Activated CD8-positive, alpha-beta memory T cell treated with anti-CD3 and anti-CD28 coated beads, Interleukin-2, amount 10 ng/mL, durations not matched to agents 7 days and 5 days (primary cell): ENCODE measurements at regions of chr16 and their contacts with region 1.

Region 1: DNA sequence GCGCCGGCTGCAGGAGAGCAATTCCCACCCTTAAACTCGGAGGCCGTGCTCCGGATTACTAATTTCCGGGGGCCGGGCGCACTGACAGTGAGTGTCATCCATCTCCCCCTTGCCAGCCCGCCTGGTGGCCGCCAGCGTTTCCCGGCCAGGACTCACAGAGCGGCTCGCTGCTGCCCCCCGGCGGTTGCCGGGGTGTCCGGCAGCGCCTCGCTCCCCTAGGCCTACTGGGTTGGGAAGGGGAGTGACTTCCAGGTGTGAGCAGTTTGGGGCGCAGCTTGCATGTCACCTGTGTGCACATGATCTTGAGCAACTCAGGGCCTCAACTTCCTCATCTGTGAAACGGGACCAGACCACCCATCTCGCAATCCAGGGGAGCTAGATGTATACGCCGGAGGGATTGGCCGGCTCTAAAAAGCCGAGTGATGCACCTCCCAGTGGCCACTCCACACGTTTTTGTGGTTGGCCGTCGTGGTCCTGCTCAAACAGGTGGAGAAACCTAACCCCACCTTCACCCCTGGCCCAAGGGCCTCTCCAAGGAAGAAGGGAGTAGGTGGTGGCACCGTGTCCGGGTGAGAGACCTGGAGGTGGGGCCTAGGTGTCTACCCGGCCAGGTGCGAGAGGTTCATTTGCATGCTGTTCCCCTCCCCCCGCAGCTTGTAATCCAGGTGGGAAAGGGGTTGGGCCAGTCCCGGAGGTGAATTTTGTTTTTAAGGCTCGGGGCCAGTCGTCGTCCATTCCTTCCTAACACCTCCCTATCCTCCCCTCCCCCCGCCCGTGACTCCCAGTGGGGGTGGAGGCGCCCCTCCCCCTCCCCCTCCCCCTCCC is 2.4 kb upstream of the GSE1 start:
- DNase-seq: peak; percentile 93
- ATAC-seq: peak; percentile 70
- H3K4me3 Mint-ChIP-seq: peak overlapping the region; percentile 53
- H3K27ac Mint-ChIP-seq: peak overlapping the region; percentile 60
- H3K4me1 Mint-ChIP-seq: peaks cover 27% of the 10 kb centered on the region
- H3K27me3 Mint-ChIP-seq: no peaks in the 10 kb centered on the region

Region 2: DNA sequence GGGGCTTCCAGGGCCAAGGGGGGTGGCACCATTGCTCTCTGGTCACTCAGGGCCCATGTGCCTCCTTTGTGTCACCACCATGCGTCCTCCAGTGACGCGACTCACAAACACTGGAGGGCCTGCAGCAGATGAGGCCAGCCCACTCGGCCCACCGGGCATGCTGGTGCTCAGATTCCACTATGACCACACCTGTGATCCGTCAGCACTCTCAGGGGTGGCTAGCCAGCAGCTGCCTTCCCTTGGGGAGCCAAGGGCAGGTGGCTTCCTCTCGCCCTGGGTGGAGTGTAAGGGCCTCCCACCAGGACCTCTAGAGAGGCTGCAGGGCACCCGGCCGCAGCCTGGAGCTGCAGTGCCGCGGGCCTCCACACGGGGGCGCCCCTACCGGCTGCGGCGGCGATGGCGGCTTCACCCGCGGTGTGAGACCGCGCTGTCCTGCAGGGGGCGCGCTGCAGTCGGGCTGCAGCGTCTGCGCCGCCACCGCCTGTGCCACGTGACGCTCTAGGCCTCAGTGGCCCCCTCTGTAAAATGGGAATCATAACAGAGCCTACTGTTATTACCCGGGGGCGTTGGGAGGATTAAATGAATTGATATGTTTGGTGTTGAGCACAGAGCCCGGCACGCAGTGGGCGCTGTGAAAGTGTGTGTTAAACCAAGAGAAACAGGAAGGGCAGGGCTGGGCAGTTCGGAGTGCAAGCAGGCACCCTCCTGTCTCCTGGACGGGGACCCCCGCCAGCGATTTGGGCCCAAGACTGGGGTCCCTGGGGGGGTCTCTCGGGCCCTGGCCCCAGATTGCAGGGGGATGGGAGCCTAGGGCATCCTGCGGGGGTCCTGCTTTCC is 190.0 kb before region 1 on chr16:
- CTCF ChIA-PET with region 1: interaction called, 237 read pairs
- DNase-seq: peak; percentile 76
- ATAC-seq: peak; percentile 72
- H3K4me3 Mint-ChIP-seq: no peak overlapping the region
- H3K27ac Mint-ChIP-seq: no peak overlapping the region
- H3K4me1 Mint-ChIP-seq: peaks cover 6% of the 10 kb centered on the region
- H3K27me3 Mint-ChIP-seq: no peaks in the 10 kb centered on the region

Region 3: DNA sequence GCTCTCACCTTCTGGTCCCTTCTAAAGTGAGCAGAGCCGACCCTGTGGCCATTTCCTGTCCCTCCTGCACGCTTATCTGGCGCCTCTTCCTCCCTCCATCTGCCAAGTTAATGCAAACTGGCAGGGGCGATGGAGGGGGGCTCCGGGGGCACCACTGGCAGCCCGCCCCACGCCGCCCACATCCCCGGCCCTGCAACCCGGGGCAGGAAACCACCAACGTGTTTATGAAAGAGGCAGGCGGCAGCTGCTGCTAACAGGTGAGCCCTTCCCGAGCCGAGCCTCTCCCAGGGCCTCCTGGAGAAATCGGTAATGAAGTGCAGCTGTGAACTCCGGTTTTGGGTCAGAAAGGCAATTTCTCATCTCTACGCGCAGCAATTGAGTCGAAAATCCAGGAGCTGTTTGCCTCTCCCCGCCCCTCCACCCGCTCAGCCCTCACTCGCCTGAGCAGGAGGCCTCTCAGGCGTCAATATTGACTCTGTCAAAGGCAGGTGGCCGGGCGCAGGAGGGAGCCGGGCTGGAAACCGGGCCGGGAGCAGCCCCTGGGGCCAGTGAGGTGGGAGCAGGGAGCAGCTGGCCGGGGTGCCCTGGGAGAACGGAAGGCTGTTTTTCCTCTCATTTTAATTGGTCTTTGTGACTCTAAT is 162.0 kb before region 1 on chr16:
- CTCF ChIA-PET with region 1: interaction called, 11 read pairs
- DNase-seq: peak; percentile 48
- ATAC-seq: peak; percentile 65
- H3K4me3 Mint-ChIP-seq: no peak overlapping the region
- H3K27ac Mint-ChIP-seq: peak overlapping the region; percentile 24
- H3K4me1 Mint-ChIP-seq: peaks cover 15% of the 10 kb centered on the region
- H3K27me3 Mint-ChIP-seq: no peaks in the 10 kb centered on the region

Region 4: GRCh38 chr16:85491058-85491771 is 119.5 kb before region 1 on chr16:
- CTCF ChIA-PET with region 1: interaction called, 30 read pairs
- DNase-seq: peak; percentile 53
- ATAC-seq: peak; percentile 36
- H3K4me3 Mint-ChIP-seq: no peak overlapping the region
- H3K27ac Mint-ChIP-seq: no peak overlapping the region
- H3K4me1 Mint-ChIP-seq: no peaks in the 10 kb centered on the region
- H3K27me3 Mint-ChIP-seq: no peaks in the 10 kb centered on the region

Region 5: GRCh38 chr16:85528528-85529387 is 82.0 kb before region 1 on chr16:
- CTCF ChIA-PET with region 1: interaction called, 15 read pairs
- DNase-seq: peak; percentile 45
- ATAC-seq: peak; percentile 58
- H3K4me3 Mint-ChIP-seq: no peak overlapping the region
- H3K27ac Mint-ChIP-seq: no peak overlapping the region
- H3K4me1 Mint-ChIP-seq: no peaks in the 10 kb centered on the region
- H3K27me3 Mint-ChIP-seq: no peaks in the 10 kb centered on the region

Region 6: DNA sequence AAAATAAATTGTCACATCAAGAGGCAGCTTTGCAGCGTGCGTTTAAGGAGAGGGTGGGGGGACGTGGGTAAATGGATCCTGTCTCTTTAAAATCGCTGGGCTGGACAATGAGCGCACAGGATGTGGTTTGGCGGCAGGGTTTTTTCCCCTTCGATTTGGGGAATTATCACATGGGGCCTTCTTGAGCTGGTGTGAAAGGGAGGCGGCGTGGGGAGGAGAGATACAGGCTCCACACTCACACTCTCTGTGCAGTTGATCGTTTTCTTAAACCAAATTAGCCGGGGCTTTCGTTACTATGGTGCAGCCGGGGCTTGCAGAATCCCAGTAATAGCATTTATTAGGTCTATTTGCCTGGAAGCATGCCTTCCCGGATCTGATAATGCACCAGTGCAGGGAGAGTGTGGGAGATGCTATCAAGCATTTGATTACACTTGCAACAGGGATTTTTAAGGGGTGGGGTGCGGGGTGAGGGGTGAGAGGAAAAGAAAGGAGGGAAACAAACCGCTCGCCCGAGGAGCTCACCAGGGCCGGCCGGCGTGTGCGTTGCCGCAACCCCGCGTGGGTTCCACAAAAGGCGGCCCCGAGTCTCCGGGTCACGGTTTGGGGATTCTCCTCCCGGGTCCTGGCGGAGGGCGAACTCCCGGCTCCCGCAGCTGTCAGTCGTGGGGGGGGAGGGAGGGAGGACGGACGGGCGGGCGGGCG is 56.5 kb before region 1 on chr16:
- CTCF ChIA-PET with region 1: interaction called, 83 read pairs
- DNase-seq: peak; percentile 94
- ATAC-seq: peak; percentile 56
- H3K4me3 Mint-ChIP-seq: peak overlapping the region; percentile 88
- H3K27ac Mint-ChIP-seq: peak overlapping the region; percentile 96
- H3K4me1 Mint-ChIP-seq: peaks cover 45% of the 10 kb centered on the region
- H3K27me3 Mint-ChIP-seq: no peaks in the 10 kb centered on the region

Region 7: DNA sequence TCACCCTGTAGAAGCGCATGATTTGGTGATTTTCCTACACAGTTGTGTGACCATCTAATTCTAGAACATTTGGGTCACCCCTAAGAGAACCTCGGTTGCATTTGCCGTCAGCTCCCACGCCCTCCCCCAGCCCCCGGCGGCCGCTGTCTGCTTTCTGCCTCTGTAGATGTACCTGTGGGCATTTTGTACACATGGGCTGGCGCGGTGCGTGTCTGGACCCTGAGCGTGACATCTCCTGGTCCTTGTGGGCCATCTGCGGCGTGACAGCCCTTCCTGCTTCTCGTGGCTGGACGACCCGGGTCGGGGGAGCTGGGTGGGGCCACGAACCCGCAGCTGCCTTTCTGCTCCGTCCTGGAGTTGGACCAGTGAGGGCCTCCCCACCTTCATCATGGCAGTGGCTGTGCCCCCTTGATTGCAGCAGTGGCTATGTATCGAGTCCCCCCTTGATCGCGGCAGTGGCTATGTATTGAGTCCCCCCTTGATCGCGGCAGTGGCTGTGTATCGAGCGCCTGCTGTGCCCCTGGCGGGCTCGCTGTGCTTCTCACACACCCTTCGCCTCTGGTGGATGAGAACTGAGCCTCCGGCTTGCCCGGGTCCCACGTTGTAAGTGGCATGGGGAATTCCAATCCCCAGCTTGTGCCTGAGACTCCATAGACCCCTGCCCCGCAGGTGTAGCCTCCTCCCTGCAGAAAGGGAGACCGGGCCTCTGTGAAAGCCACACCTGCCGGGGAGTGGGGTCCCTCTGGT is 26.5 kb after region 1 on chr16:
- CTCF ChIA-PET with region 1: no interaction called
- DNase-seq: no peak
- ATAC-seq: no peak
- H3K4me3 Mint-ChIP-seq: no peak overlapping the region
- H3K27ac Mint-ChIP-seq: no peak overlapping the region
- H3K4me1 Mint-ChIP-seq: no peaks in the 10 kb centered on the region
- H3K27me3 Mint-ChIP-seq: no peaks in the 10 kb centered on the region